Mammary epithelial cell (primary cell): ENCODE measurements at regions of chr2 and their contacts with region 1.

Region 1: GRCh38 chr2:226118471-226119430 is 680.9 kb downstream of the IRS1 start:
- DNase-seq: peak; percentile 94
- H3K4me3 ChIP-seq: peak overlapping the region in 2 of 3 experiments; percentile 5 to 23
- H3K27ac ChIP-seq: peak overlapping the region; percentile 97
- H3K4me1 ChIP-seq: peaks cover 48% of the 10 kb centered on the region
- H3K27me3 ChIP-seq: no peaks in the 10 kb centered on the region
- CTCF ChIP-seq: no peak

Region 2: GRCh38 chr2:225889446-225889850 is 229.3 kb before region 1 on chr2:
- CTCF ChIA-PET with region 1: interaction called, 3 read pairs
- dilution Hi-C with region 1: no loop called
- in situ Hi-C with region 1: no loop called
- intact Hi-C with region 1: loop called (anchors 1 kb)
- DNase-seq: peak; percentile 73
- H3K4me3 ChIP-seq: no peak overlapping the region
- H3K27ac ChIP-seq: peak overlapping the region; percentile 45
- H3K4me1 ChIP-seq: peaks cover 4% of the 10 kb centered on the region
- H3K27me3 ChIP-seq: no peaks in the 10 kb centered on the region
- CTCF ChIP-seq: peak; percentile 60 to 80

Region 3: GRCh38 chr2:226063704-226064440 is 54.9 kb before region 1 on chr2:
- CTCF ChIA-PET with region 1: no interaction called
- dilution Hi-C with region 1: no loop called
- in situ Hi-C with region 1: no loop called
- intact Hi-C with region 1: loop called (anchors 5 kb)
- DNase-seq: peak; percentile 97
- H3K4me3 ChIP-seq: no peak overlapping the region
- H3K27ac ChIP-seq: peak overlapping the region; percentile 87
- H3K4me1 ChIP-seq: peaks cover 34% of the 10 kb centered on the region
- H3K27me3 ChIP-seq: no peaks in the 10 kb centered on the region
- CTCF ChIP-seq: no peak

Region 4: DNA sequence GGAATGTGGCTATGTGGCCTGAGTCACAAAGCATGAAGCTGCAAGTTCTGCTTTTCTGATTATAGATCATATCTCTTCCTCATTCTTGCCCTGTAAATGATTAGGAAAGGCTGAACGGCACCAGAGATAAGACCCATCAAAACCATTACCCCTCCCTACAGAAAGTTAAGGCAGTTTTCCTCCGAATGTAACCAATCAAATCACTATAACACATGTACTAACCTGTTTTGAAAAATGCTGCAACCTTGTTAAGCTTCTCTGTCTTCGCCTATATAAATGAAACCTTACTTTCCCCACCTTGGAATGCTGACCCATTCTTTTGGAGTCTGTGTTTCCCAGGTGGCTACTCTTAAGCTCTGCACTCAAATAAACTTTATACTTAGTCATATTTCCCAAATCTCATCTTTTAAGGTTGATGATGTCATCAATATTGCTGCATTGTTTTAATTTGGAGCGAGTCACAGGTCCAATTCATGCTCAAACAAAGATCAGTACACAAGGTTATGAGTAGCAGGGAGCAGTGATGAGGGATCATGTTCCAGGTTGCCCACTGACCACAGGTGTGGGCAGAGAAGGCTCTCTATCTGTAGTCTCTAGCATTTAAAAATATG is 18.6 kb after region 1 on chr2:
- CTCF ChIA-PET with region 1: no interaction called
- dilution Hi-C with region 1: no loop called
- in situ Hi-C with region 1: no loop called
- intact Hi-C with region 1: loop called (anchors 1 kb)
- DNase-seq: peak; percentile 99
- H3K4me3 ChIP-seq: peak overlapping the region in 2 of 3 experiments; percentile 6 to 16
- H3K27ac ChIP-seq: peak overlapping the region; percentile 95
- H3K4me1 ChIP-seq: peaks cover 14% of the 10 kb centered on the region
- H3K27me3 ChIP-seq: no peaks in the 10 kb centered on the region
- CTCF ChIP-seq: no peak

Region 5: GRCh38 chr2:226215902-226216503 is 97.3 kb after region 1 on chr2:
- CTCF ChIA-PET with region 1: interaction called, 11 read pairs
- dilution Hi-C with region 1: no loop called
- in situ Hi-C with region 1: no loop called
- intact Hi-C with region 1: no loop called
- DNase-seq: peak; percentile 21
- H3K4me3 ChIP-seq: no peak overlapping the region
- H3K27ac ChIP-seq: no peak overlapping the region
- H3K4me1 ChIP-seq: peaks cover 21% of the 10 kb centered on the region
- H3K27me3 ChIP-seq: no peaks in the 10 kb centered on the region
- CTCF ChIP-seq: peak; percentile 60 to 78

Region 6: DNA sequence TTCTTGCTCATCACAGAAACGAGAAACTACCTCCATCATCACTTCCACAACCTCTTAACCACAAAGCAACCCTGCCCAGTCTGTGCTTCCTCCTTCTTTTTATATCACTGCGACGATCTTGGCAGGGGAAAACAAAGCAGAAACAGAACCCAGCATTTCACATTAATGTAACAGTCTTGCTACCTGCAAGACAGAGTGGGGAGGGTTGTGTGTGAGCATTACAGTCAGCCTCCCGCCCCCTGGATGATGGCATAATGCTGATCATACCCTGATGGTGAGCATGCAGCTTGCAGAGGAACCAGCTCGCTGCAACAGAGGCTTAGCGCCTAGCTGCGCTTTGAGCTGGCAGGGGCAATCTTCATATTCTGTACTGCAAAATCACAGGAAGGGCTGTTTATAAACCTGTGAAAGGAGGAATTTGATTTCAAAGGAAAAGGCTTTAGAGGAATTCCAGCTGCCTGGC is 304.8 kb after region 1 on chr2:
- CTCF ChIA-PET with region 1: no interaction called
- dilution Hi-C with region 1: no loop called
- in situ Hi-C with region 1: no loop called
- intact Hi-C with region 1: loop called (anchors 2 kb)
- DNase-seq: peak; percentile 82
- H3K4me3 ChIP-seq: no peak overlapping the region
- H3K27ac ChIP-seq: no peak overlapping the region
- H3K4me1 ChIP-seq: peaks cover 45% of the 10 kb centered on the region
- H3K27me3 ChIP-seq: no peaks in the 10 kb centered on the region
- CTCF ChIP-seq: no peak

Region 7: DNA sequence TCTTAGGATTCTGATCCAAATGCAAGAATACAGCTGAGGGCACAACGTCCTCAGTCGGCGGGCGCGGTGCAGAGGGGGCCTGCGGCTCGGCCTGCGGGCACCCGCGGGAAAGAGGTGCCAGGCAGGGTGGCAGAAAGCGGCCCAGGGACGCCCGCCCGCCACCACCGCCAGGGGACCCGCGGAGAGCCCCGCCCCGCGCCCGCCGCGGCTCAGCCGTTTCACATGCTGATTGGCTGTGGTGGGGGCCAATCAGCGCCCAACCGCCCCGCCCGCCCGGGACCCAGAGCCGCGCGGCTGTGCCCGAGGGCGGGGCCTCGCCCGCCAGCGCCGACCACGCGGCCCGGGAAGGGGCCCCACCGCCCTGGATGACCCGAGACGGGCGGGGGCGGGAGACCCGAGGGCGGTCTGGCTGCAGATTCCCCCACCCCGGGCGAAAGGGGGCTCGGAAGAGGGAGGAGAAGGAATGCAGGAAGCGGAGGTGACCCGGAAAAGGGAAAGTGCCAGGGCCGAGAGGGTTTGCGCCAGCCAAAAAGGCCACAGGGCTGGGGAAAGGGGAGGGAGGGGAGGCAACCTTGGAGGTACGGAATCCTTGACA is 672.8 kb after region 1 on chr2:
- CTCF ChIA-PET with region 1: interaction called, 6 read pairs
- dilution Hi-C with region 1: no loop called
- in situ Hi-C with region 1: no loop called
- intact Hi-C with region 1: loop called (anchors 2 kb)
- DNase-seq: peak; percentile 82
- H3K4me3 ChIP-seq: peak overlapping the region; percentile 82 to 92 (median 85)
- H3K27ac ChIP-seq: peak overlapping the region; percentile 87
- H3K4me1 ChIP-seq: peaks cover 32% of the 10 kb centered on the region
- H3K27me3 ChIP-seq: no peaks in the 10 kb centered on the region
- CTCF ChIP-seq: peak in 1 of 2 donors; percentile 31